CD8-positive, alpha-beta T cell (primary cell): ENCODE measurements at regions of chr18 and their contacts with region 1.

Region 1: DNA sequence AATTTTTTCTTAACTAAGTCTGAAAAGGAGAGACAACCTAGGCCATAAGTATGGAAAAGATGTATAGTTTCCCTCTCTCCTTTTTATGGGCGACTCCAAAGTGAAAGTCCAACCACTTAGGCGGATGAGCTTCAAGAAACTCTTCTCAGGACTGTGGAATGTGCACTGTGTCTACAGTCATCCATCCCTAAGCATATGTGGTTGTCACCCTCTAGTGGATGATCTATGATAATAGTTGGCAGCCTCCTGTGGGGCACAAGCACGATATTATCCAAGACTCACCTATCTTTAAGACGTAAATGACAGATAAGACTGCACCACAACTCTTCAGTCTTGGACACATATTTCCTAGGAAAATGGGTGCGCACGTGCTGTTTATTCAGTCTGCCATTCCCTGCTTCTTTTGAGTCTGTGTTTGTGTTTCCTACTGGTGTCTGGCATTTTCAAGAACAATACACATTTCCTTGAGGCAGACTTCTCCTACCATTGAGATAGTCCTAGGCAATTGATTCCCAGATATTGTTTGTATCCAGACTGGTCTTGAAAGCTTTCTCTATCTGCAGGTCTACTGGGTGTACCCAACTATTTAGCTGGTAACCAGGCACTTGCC is 145.5 kb upstream of the CTAGE1 start:
- DNase-seq: peak in 4 of 9 experiments; percentile 14 to 79 (median 44)
- ATAC-seq: peak; percentile 78
- H3K4me3 ChIP-seq: no peak overlapping the region
- H3K4me3 Mint-ChIP-seq: no peak overlapping the region
- H3K27ac ChIP-seq: no peak overlapping the region
- H3K27ac Mint-ChIP-seq: no peak overlapping the region
- H3K4me1 ChIP-seq: peaks cover 10% of the 10 kb centered on the region
- H3K4me1 Mint-ChIP-seq: peaks cover 8% of the 10 kb centered on the region
- H3K27me3 ChIP-seq: peaks cover 7 to 29% of the 10 kb centered on the region in 2 experiments
- H3K27me3 Mint-ChIP-seq: peaks cover 45% of the 10 kb centered on the region
- CTCF ChIP-seq: peak; percentile 44

Region 2: DNA sequence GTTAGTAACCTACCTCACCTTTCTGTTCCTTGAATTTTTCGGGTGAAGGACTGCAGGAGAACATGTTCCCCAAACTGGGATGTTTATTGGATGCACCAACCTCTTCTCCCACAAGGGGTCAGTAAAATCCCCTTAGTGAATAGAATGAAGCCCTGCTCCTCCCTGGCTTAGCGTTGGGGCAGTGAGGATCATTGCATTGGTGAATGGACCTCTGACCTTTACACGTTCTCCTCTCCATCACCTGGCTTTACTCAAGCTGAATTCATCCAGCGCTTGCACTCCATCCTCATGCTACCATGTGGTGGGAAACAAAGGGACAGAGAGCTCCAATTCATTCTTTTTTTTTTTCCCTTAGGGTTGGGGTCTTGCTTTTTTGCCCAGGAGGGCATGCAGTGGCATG is 665.4 kb before region 1 on chr18:
- CTCF ChIA-PET with region 1: no interaction called
- POLR2A ChIA-PET with region 1: no interaction called
- intact Hi-C with region 1: loop called in 1 of 2 experiments (anchors 2 kb)
- DNase-seq: peak in 3 of 9 experiments; percentile 16 to 38 (median 32)
- ATAC-seq: no peak
- H3K4me3 ChIP-seq: no peak overlapping the region
- H3K4me3 Mint-ChIP-seq: no peak overlapping the region
- H3K27ac ChIP-seq: no peak overlapping the region
- H3K27ac Mint-ChIP-seq: no peak overlapping the region
- H3K4me1 ChIP-seq: no peaks in the 10 kb centered on the region
- H3K4me1 Mint-ChIP-seq: no peaks in the 10 kb centered on the region
- H3K27me3 ChIP-seq: peaks cover 0 to 7% of the 10 kb centered on the region in 2 experiments
- H3K27me3 Mint-ChIP-seq: peaks cover 24% of the 10 kb centered on the region
- CTCF ChIP-seq: peak; percentile 50

Region 3: DNA sequence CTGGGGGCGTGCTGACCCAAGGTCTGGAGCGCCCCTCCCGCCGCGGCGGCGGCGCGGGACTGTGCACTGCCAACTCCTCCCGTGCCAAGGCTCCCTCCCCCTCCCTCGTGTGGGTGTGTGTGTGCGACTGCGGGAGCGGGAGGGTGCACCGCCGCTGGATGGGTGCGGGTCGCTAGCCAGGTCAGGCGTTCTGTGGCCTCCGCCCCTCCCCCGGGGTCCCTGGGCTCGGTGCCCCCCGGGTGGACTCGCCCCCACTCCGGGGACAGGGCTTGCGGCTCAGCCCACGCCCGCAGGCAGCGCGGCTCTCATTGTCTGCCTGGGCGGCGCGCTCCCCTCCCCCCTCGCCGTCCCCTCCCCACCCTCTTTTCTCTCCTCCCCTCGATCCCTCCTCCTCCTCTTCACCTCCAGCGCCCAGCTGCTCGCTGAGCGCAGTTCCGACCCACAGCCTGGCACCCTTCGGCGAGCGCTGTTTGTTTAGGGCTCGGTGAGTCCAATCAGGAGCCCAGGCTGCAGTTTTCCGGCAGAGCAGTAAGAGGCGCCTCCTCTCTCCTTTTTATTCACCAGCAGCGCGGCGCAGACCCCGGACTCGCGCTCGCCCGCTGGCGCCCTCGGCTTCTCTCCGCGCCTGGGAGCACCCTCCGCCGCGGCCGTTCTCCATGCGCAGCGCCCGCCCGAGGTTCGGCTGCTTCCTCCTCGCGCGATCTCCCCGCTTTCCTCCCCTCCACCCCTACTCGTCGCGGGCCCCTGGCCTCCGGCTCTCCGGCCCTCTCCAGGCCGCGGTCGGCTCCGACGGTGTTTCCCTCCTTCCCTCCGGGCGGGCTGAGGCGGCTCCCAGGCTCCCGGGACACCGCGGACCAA is 394.0 kb before region 1 on chr18 and contains the start of gene GATA6:
- CTCF ChIA-PET with region 1: no interaction called
- POLR2A ChIA-PET with region 1: no interaction called
- intact Hi-C with region 1: loop called (anchors 1 to 2 kb)
- DNase-seq: peak in 7 of 9 experiments; percentile 15 to 82 (median 63)
- ATAC-seq: peak; percentile 72
- H3K4me3 ChIP-seq: peak within 1 kb of the TSS; percentile 54 to 68
- H3K4me3 Mint-ChIP-seq: peak within 1 kb of the TSS; percentile 90
- H3K27ac ChIP-seq: no peak within 1 kb of the TSS
- H3K27ac Mint-ChIP-seq: no peak within 1 kb of the TSS
- H3K4me1 ChIP-seq: peaks cover 34% of the 10 kb centered on the region
- H3K4me1 Mint-ChIP-seq: peaks cover 29% of the 10 kb centered on the region
- H3K27me3 ChIP-seq: peaks cover 44 to 59% of the 10 kb centered on the region in 2 experiments
- H3K27me3 Mint-ChIP-seq: peaks cover 62% of the 10 kb centered on the region
- CTCF ChIP-seq: peak; percentile 13
- total RNA-seq, gene GATA6: 4.0 to 4.3 TPM

Region 4: GRCh38 chr18:22267697-22268096 is 295.5 kb before region 1 on chr18:
- CTCF ChIA-PET with region 1: no interaction called
- POLR2A ChIA-PET with region 1: no interaction called
- intact Hi-C with region 1: loop called in 1 of 2 experiments (anchors 10 kb)
- DNase-seq: no peak
- ATAC-seq: no peak
- H3K4me3 ChIP-seq: no peak overlapping the region
- H3K4me3 Mint-ChIP-seq: no peak overlapping the region
- H3K27ac ChIP-seq: no peak overlapping the region
- H3K27ac Mint-ChIP-seq: no peak overlapping the region
- H3K4me1 ChIP-seq: no peaks in the 10 kb centered on the region
- H3K4me1 Mint-ChIP-seq: peaks cover 5% of the 10 kb centered on the region
- H3K27me3 ChIP-seq: no peaks in the 10 kb centered on the region
- H3K27me3 Mint-ChIP-seq: peaks cover 4% of the 10 kb centered on the region
- CTCF ChIP-seq: no peak

Region 5: DNA sequence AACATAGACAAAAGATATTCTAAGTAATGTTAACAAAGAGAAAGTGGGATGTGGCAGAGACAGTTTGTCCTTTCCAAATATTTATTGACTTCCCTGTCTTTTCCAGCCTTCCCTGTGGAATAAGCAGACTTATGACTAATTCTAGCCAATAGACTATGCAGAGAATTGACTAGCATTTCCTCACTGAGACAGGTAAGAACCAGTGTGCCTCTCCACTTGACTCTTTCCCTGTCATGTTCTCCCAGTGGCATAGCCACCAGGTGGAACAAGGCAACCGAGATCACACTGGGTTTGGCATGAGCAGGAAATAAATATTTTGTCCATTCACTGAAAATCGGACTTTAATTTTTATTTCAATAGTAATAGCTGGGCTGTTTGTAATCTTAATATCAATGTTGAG is 22.6 kb after region 1 on chr18:
- CTCF ChIA-PET with region 1: no interaction called
- POLR2A ChIA-PET with region 1: no interaction called
- intact Hi-C with region 1: no loop called
- DNase-seq: no peak
- ATAC-seq: no peak
- H3K4me3 ChIP-seq: no peak overlapping the region
- H3K4me3 Mint-ChIP-seq: no peak overlapping the region
- H3K27ac ChIP-seq: no peak overlapping the region
- H3K27ac Mint-ChIP-seq: no peak overlapping the region
- H3K4me1 ChIP-seq: no peaks in the 10 kb centered on the region
- H3K4me1 Mint-ChIP-seq: no peaks in the 10 kb centered on the region
- H3K27me3 ChIP-seq: peaks cover 0 to 4% of the 10 kb centered on the region in 2 experiments
- H3K27me3 Mint-ChIP-seq: peaks cover 7% of the 10 kb centered on the region
- CTCF ChIP-seq: no peak

Region 6: DNA sequence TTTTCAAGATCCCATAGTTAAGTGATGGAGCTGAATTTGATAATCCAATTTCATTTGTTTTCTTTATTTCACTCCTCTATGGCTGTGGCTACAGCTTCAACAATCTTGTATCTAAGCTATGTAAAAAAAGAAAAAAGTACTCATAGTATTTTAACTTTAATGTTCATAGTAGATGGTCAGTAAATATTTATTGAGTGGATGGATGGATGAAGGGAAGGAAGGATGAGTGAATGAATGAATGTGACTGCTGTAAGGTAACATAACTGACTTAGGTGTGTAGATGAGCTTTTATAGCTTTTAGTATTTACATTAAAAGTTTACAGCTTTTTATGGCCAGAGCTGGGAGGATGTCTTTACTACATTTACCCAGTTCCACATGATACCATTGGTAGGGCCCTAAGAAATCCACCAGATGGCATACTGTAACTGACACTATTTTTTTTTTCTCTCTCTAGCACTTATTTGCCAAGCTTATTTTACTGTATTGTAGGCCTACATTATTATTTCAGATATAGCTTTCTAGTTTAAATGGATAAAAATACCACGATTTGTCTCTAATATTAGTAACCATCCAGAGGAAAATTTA is 1883.8 kb after region 1 on chr18:
- CTCF ChIA-PET with region 1: no interaction called
- POLR2A ChIA-PET with region 1: no interaction called
- intact Hi-C with region 1: loop called in 1 of 2 experiments (anchors 5 kb)
- DNase-seq: no peak
- ATAC-seq: no peak
- H3K4me3 ChIP-seq: no peak overlapping the region
- H3K4me3 Mint-ChIP-seq: no peak overlapping the region
- H3K27ac ChIP-seq: no peak overlapping the region
- H3K27ac Mint-ChIP-seq: no peak overlapping the region
- H3K4me1 ChIP-seq: no peaks in the 10 kb centered on the region
- H3K4me1 Mint-ChIP-seq: no peaks in the 10 kb centered on the region
- H3K27me3 ChIP-seq: no peaks in the 10 kb centered on the region
- H3K27me3 Mint-ChIP-seq: no peaks in the 10 kb centered on the region
- CTCF ChIP-seq: no peak